Cardiac septum (tissue), 1 donor: ENCODE measurements at regions of chr13 and their contacts with region 1.

Region 1: DNA sequence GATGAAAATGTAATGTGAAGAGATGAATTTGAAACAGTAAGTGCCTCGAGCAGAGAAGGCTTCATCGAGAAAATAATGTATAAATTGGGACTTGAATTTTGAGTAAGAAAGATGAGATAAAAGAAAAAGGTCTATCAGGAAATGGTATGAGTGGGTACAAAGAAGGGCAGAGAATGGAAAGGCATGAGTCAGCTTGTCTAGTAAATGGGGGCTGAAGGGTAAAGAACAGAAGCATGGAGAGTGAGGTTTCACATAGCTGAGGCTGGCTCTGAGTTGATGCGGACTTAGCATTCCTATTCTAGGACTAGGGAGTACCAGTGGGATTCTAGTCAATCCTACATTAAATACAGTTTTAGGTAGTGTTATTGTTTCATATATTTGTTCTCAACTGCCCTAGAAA is 85.8 kb downstream of the ZC3H13 start:
- DNase-seq: no peak

Region 2: DNA sequence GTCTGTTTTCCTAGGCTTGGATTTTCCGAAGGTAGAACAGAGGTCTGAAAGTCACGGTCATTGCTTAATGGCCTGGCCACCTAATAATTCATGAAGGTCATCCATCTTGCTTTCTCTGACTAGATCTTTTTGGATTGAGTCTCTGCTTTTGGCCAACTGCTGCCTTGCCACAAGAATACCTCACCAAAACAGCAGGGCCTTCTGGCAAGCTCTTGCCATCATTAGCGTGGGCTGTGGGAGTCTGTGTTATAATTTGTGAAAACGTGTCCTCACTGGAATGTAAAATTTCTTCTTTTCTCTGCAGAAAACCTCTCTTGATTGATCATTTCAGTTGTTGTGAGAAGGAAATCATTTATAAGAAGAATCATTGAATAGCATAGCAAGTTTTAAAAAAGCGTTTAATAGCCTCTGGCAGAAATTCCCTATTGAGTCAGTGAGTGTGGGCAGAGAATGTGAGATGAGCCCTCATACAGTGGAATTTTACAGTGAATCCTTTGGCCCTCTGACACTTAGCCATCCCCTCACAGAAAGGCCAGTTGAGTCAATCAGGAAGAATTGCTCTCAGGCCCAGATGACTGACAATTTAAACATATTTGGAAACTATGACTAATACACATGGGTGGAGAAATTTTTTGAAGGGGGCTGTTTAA is 308.0 kb before region 1 on chr13:
- intact Hi-C with region 1: no loop called
- DNase-seq: no peak

Region 3: DNA sequence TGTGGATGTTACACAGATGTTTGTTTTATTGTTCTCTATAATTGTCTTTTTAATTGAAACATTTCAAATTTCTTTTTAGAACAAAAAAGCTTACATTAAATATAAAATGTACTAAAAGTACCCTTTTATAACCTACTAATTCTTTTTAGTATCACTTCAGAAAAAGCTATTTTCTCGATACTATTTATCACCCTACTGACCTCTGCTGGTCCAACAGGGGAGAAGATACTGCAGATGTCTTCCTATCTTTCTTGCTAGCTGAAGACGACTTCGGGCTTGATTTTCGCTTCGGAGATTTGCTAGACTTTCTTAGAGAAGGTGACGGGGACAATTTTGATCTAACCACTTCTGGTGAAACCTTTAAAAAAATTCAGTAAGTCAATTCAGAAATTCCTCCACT is 43.4 kb after region 1 on chr13:
- intact Hi-C with region 1: loop called (anchors 10 kb)
- DNase-seq: no peak